Activated T-helper 2 cell treated with anti-CD3 and anti-CD28 coated beads, Interferon-gamma antibody, Interleukin-2, Interleukin-4, amounts not matched to agents 10 μg/mL and 5 μg/mL and 100 μg/mL, durations not matched to agents 14 hours and 24 hours and 36 hours (primary cell): ENCODE measurements at regions of chr1 and their contacts with region 1.

Region 1: GRCh38 chr1:88877382-88877825 is 14.0 kb downstream of the GTF2B start:
- DNase-seq: no peak
- H3K4me3 Mint-ChIP-seq: no peak overlapping the region
- H3K27ac Mint-ChIP-seq: no peak overlapping the region
- H3K4me1 Mint-ChIP-seq: peaks cover 20% of the 10 kb centered on the region
- H3K27me3 Mint-ChIP-seq: no peaks in the 10 kb centered on the region

Region 2: DNA sequence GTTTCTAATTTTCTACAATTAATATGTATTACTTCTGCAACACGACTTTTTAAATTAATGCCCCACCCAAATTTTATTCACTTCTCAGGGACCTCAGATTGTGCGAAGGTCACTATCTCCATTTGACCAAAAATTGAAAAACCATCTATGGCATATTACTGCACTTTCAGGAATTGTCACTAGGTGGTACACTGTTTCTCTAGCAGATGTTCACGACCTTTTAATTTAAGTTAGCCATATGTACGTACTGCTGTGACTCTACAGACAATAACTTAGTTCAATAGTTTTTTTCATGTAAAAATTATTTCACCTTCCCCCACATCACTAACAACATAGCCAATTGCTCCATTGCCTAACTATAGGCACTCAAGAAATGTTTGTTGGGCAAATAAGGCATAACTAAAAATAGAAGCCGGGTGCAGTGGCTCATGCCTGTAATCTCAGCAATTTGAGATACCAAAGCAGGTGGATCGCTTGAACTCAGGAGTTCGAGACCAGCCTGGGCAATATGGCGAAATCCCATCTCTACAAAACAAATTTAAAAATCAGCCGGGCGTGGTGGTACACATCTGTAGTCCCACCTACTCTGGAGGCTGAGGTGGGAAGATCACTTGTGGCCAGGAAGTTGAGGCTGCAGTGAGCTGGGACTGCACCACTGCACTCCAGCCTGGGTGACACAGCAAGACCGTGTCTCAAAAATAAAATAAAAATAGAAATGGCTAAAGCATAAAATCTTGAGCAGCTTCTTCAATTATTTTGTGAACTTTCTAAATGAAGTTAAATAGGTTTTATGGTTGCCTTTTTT is 269.1 kb before region 1 on chr1:
- intact Hi-C with region 1: loop called (anchors 1 kb)
- DNase-seq: no peak
- H3K4me3 Mint-ChIP-seq: no peak overlapping the region
- H3K27ac Mint-ChIP-seq: no peak overlapping the region
- H3K4me1 Mint-ChIP-seq: no peaks in the 10 kb centered on the region
- H3K27me3 Mint-ChIP-seq: peaks cover 6% of the 10 kb centered on the region

Region 3: GRCh38 chr1:88655685-88656299 is 221.6 kb before region 1 on chr1:
- intact Hi-C with region 1: loop called (anchors 1 kb)
- DNase-seq: no peak
- H3K4me3 Mint-ChIP-seq: no peak overlapping the region
- H3K27ac Mint-ChIP-seq: no peak overlapping the region
- H3K4me1 Mint-ChIP-seq: peaks cover 18% of the 10 kb centered on the region
- H3K27me3 Mint-ChIP-seq: peaks cover 4% of the 10 kb centered on the region

Region 4: DNA sequence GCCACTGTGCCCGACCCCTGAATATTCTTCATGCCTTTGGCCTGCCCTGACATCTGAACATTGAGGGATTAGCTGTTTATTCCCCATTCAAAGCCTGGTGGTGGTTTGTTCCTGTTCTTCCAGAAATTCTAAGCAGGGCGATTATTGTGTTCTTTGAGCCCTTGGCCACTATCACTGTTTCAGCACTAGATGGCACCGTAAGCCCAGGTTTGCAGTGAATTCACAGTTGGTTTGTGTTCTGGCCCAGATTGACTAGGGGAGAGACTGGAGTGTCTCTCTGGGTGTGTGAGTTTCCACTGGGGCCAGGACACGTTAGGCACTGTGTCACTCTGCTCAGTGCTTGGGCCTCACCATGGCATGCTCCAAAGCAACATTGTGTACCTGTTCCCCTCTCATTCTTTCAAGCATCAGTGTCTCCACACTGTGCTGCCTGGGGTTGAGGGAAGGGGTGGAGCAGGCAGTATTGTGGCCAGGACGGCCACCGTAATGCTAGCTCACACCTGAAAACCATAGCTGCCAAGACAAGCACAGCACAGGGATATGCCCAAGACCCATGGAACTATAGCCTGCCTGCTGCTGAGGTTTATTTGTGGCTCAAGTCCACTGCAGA is 140.7 kb before region 1 on chr1:
- intact Hi-C with region 1: loop called (anchors 2 kb)
- DNase-seq: no peak
- H3K4me3 Mint-ChIP-seq: no peak overlapping the region
- H3K27ac Mint-ChIP-seq: no peak overlapping the region
- H3K4me1 Mint-ChIP-seq: peaks cover 19% of the 10 kb centered on the region
- H3K27me3 Mint-ChIP-seq: no peaks in the 10 kb centered on the region

Region 5: DNA sequence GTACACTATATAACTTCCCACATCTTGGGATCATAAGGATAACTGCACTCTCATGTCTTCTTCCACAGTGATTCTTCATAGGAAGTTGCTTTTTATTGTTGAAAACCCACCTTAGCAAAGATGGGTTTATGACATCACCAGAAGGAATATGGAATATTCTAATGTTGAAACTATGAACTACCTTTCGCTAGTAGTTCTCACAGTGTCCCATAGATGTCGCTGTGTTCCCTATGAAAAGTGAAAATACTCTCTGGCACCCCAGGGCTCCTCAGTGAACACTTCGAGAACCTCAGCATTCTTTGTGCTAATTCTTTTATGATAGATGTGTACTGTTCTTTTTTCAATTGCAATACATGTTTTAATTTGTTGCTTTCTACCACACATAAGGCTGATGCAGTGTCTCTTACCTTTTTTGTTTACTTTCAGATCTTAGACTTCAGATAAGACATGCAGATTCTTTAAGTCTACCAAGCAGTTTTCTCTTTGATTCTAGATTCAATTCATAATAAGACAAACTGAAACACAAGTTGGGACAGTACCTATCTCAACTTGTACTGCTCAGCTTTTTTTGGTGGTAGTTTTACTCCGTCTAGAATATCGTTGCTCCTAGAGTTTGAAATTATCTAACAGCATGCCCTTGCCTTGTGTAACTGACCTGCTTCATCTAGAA is 76.9 kb before region 1 on chr1:
- intact Hi-C with region 1: loop called (anchors 5 kb)
- DNase-seq: no peak
- H3K4me3 Mint-ChIP-seq: no peak overlapping the region
- H3K27ac Mint-ChIP-seq: peak overlapping the region; percentile 16
- H3K4me1 Mint-ChIP-seq: peaks cover 12% of the 10 kb centered on the region
- H3K27me3 Mint-ChIP-seq: no peaks in the 10 kb centered on the region